PC-9 (cell line): ENCODE measurements at regions of chr3 and their contacts with region 1.

Region 1: GRCh38 chr3:77667901-77668300 is 628.0 kb downstream of the ROBO2 start:
- DNase-seq: no peak
- H3K4me3 ChIP-seq: no peak overlapping the region
- H3K27ac ChIP-seq: no peak overlapping the region
- H3K4me1 ChIP-seq: no peaks in the 10 kb centered on the region
- H3K27me3 ChIP-seq: no peaks in the 10 kb centered on the region
- CTCF ChIP-seq: no peak

Region 2: DNA sequence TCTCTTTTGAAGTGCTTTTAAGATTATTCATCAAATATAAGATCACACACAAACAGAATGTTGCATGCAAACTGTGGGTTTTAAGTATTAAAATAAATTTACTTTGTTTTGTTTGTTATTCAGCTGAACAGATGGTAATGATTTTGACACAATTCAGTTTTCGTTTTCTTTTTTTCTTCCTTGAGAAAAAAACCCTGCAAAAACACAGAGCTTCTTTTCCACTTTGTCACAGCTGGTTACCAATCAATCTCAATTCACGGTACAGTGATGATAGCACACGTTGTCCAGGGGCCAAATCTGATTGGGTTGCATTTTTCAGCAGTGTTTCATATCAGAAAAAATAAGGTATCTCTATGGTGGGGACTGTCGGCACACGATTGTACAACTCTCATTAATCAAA is 154.4 kb before region 1 on chr3:
- CTCF ChIA-PET with region 1: no interaction called
- POLR2A ChIA-PET with region 1: no interaction called
- intact Hi-C with region 1: no loop called
- DNase-seq: no peak
- H3K4me3 ChIP-seq: no peak overlapping the region
- H3K27ac ChIP-seq: no peak overlapping the region
- H3K4me1 ChIP-seq: no peaks in the 10 kb centered on the region
- H3K27me3 ChIP-seq: no peaks in the 10 kb centered on the region
- CTCF ChIP-seq: no peak

Region 3: DNA sequence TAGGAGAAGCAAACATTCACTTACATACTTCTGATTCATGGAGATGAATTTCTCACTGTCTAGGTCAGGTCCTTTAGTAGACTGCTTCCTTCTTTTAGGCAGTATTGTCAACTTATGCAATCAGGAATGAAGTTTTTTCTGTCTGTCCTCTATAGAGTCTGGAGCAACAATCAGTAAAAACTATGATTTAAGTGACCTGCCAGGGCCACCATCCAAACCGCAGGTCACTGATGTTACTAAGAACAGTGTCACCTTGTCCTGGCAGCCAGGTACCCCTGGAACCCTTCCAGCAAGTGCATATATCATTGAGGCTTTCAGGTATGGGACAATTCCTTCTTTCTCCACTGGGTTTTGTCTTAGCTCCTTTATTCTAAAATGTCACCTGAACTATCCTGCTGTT is 104.9 kb before region 1 on chr3:
- CTCF ChIA-PET with region 1: no interaction called
- POLR2A ChIA-PET with region 1: no interaction called
- intact Hi-C with region 1: no loop called
- DNase-seq: peak in 1 of 2 experiments; percentile 58
- H3K4me3 ChIP-seq: no peak overlapping the region
- H3K27ac ChIP-seq: no peak overlapping the region
- H3K4me1 ChIP-seq: no peaks in the 10 kb centered on the region
- H3K27me3 ChIP-seq: no peaks in the 10 kb centered on the region
- CTCF ChIP-seq: no peak

Region 4: DNA sequence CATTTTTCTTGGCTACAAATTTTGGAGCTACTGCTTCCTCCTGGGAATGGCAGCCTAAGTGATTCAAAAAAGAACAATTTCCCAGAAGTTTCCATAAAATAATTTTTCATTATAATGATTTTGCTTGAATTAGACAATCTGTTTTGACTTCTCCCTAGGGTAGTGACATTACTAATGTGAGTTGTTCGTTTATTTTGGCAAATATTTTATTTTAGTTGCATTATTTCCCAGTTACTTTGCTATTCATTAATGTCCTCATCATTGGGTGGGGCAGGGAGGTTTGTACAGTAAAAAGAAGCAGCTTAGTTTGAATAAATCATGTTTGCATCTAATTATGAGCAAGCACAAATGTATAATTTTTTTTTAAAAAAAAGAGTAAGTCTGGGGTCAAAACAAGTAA is 58.6 kb after region 1 on chr3:
- CTCF ChIA-PET with region 1: no interaction called
- POLR2A ChIA-PET with region 1: no interaction called
- intact Hi-C with region 1: loop called (anchors 10 kb)
- DNase-seq: no peak
- H3K4me3 ChIP-seq: no peak overlapping the region
- H3K27ac ChIP-seq: no peak overlapping the region
- H3K4me1 ChIP-seq: no peaks in the 10 kb centered on the region
- H3K27me3 ChIP-seq: no peaks in the 10 kb centered on the region
- CTCF ChIP-seq: no peak

Region 5: DNA sequence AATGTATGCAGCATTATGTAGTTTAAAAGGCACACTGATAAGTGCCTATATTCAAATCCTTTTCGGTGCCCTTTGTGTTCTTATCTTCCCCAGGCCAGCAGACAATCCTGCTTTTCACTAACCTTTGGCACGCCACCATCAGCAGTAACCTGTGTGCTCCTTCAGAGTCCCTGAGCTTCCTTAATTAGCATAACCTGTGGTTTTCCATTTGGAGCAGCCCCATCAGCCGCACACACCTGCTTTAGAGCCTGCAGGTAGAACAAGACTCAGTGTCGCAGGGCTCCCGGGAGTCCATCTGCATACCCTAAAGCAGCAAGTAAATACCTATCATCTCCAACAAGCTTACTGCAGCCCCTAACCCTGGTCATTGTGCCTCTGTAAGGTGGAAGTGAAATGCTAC is 127.1 kb after region 1 on chr3:
- CTCF ChIA-PET with region 1: no interaction called
- POLR2A ChIA-PET with region 1: no interaction called
- intact Hi-C with region 1: no loop called
- DNase-seq: no peak
- H3K4me3 ChIP-seq: no peak overlapping the region
- H3K27ac ChIP-seq: no peak overlapping the region
- H3K4me1 ChIP-seq: no peaks in the 10 kb centered on the region
- H3K27me3 ChIP-seq: no peaks in the 10 kb centered on the region
- CTCF ChIP-seq: no peak

Region 6: GRCh38 chr3:77939726-77940125 is 271.8 kb after region 1 on chr3:
- CTCF ChIA-PET with region 1: no interaction called
- POLR2A ChIA-PET with region 1: no interaction called
- intact Hi-C with region 1: loop called (anchors 10 kb)
- DNase-seq: no peak
- H3K4me3 ChIP-seq: no peak overlapping the region
- H3K27ac ChIP-seq: no peak overlapping the region
- H3K4me1 ChIP-seq: no peaks in the 10 kb centered on the region
- H3K27me3 ChIP-seq: no peaks in the 10 kb centered on the region
- CTCF ChIP-seq: no peak

Region 7: DNA sequence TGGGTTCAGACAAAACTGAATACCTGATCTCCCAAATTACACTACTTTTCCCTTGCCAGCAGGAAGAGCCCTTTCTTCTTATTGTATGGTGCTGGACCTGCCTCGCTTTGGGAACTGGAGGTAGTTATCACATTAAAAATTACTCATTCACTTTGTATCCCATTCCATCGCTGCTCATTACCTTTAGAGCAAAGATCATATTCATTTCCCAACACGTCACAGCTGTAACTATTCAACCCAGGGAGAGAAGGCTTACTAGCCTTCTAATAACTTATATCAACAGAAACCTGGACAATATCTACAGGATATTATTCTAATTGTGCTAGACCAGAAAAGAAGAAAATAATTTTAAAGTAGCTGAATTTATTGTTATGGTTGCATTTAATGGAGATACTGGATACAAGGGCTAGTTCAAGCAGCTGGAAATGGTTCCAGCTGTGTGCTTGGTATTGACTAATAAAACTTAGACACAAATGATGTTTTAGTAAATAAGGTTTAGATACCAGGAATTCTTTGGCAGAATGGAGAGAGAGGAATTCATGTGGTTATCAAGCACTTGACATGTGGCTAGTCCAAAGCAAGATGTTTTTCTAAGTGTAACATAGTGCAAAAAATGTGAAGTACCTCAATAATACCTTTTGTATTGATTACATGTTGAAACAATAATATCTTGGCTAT is 1443.6 kb after region 1 on chr3:
- CTCF ChIA-PET with region 1: no interaction called
- POLR2A ChIA-PET with region 1: no interaction called
- intact Hi-C with region 1: no loop called
- DNase-seq: no peak
- H3K4me3 ChIP-seq: no peak overlapping the region
- H3K27ac ChIP-seq: no peak overlapping the region
- H3K4me1 ChIP-seq: no peaks in the 10 kb centered on the region
- H3K27me3 ChIP-seq: no peaks in the 10 kb centered on the region
- CTCF ChIP-seq: no peak